ENCODE measurements at regions of chrX and their contacts with region 1.

Region 1: DNA sequence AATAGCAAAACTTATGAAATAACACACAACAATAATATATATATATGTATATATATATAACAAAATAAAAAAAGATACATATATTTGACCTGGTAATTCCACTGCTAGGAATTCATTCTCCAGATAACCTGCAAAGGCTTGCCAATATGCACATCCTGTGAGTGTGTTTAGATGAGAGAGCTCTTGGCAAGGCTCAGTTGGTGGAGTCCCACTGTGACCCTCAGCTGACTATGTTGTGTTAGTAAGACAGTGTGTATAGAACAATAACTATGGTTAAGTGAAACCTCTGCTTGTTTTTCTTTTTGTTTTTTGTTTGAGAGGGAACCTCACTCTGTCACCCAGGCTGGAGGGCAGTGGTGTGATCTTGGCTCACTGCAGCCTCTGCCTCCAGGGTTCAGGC is 39.5 kb upstream of the RBMX start:
- DNase-seq: no peak
- ATAC-seq: no peak
- H3K4me3 ChIP-seq: no peak overlapping the region
- H3K4me1 ChIP-seq: no peaks in the 10 kb centered on the region
- CTCF ChIP-seq: no peak

Region 2: DNA sequence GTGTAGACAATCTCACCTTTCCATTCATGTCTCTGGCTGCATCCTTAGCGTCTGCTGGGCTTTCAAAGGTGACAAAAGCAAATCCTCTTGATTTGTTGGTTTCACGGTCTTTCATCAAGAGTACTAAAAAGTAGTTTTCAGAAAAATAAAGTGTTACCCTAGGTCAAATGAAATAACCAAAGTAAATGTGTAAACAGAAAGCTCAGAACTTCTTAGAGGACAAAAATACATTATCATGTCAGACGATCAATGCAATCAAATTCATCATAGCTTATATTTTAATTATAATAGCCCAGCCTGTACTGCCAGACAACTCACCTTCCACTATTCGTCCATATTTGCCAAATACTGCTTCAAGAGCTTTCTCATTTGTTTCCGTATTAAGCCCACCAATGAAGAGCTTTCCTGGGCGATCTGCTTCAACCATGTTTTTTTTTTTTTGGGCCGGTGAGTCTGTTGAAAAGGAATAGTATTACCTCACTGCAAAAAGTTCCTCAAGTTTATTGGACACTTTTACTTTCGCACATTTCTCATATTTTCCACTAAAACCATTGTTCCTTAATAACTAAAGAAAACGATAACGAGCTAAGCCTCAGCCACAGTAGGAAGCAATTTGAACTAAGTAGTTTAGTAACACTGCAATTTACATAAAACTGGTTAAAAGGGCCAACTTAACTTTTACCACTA is 40.9 kb before region 1 on chrX:
- intact Hi-C with region 1: loop called in 1 of 2 experiments (anchors 10 kb)
- DNase-seq: no peak
- ATAC-seq: no peak
- H3K4me3 ChIP-seq: peak overlapping the region; percentile 59
- H3K4me1 ChIP-seq: no peaks in the 10 kb centered on the region
- CTCF ChIP-seq: no peak

Measured in mucosa of descending colon (tissue), 3 donors.